GM12878 (cell line): ENCODE measurements at regions of chr3 and their contacts with region 1.

Region 1: GRCh38 chr3:167882067-167882667 is 146.6 kb downstream of the SERPINI1 start:
- DNase-seq: no peak
- ATAC-seq: peak; percentile 77
- H3K4me3 ChIP-seq: no peak overlapping the region
- H3K27ac ChIP-seq: no peak overlapping the region
- H3K4me1 ChIP-seq: no peaks in the 10 kb centered on the region
- H3K27me3 ChIP-seq: peaks cover 0 to 3% of the 10 kb centered on the region in 2 experiments; a peak in 1 of 4 replicates
- CTCF ChIP-seq: peak; percentile 37 to 63 (median 52); a peak in 5 of 6 replicates
- EP300 ChIP-seq: no peak
- POLR2A ChIP-seq: no peak
- RAD21 ChIP-seq: peak; percentile 73

Region 2: GRCh38 chr3:167380004-167380689 is 502.0 kb before region 1 on chr3 and contains the start of gene ZBBX:
- CTCF ChIA-PET with region 1: interaction called, 111 read pairs
- POLR2A ChIA-PET with region 1: no interaction called
- RAD21 ChIA-PET with region 1: interaction called, 65 read pairs
- SMC1A ChIA-PET with region 1: interaction called, 34 read pairs
- in situ Hi-C with region 1: loop called (anchors 5 kb)
- intact Hi-C with region 1: loop called (anchors 1 kb)
- DNase-seq: peak; percentile 51
- ATAC-seq: peak; percentile 99
- H3K4me3 ChIP-seq: peak within 1 kb of the TSS; percentile 48; the same call in 1 of the 2 replicates
- H3K27ac ChIP-seq: no peak within 1 kb of the TSS
- H3K4me1 ChIP-seq: no peaks in the 10 kb centered on the region
- H3K27me3 ChIP-seq: no peaks in the 10 kb centered on the region
- CTCF ChIP-seq: peak; percentile 93 to 96 (median 95)
- EP300 ChIP-seq: no peak
- POLR2A ChIP-seq: no peak
- RAD21 ChIP-seq: peak; percentile 80
- polyA plus RNA-seq, gene ZBBX: 0.27 TPM in 1 of 2 experiments, not detected in the other

Region 3: DNA sequence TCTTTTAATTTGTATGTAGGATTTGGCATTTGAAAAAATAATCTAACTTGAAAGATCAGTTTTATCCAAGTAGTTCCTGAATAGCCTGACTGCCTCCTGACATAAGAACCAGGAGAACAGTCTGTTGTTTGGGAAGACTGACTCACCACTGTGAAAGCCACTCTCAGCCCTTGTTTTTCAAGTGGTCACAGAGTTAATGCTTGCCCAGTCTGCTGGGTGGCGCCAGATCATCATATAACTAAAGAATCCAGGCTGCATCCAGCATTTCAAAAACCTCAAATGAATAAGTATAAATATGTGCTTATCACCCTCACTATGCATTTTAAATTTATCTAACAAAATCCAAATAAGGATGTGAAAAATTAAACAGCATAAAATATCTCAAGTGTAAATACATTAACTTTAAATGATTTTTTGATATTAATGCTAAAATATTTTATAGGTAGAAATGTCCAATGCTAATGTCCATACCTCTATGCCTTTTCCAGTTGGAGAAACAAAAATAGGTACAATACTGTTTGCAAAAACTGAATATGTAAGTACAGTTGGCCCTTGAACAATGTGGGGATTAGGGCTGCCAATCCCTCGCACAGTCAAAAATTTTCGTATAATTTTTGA is 475.2 kb before region 1 on chr3:
- CTCF ChIA-PET with region 1: interaction called, 9 read pairs
- POLR2A ChIA-PET with region 1: no interaction called
- RAD21 ChIA-PET with region 1: interaction called, 4 read pairs
- SMC1A ChIA-PET with region 1: interaction called, 4 read pairs
- in situ Hi-C with region 1: no loop called
- intact Hi-C with region 1: loop called (anchors 1 kb)
- DNase-seq: no peak
- ATAC-seq: peak; percentile 60; the same call in 2 of the 3 replicates
- H3K4me3 ChIP-seq: no peak overlapping the region
- H3K27ac ChIP-seq: no peak overlapping the region
- H3K4me1 ChIP-seq: no peaks in the 10 kb centered on the region
- H3K27me3 ChIP-seq: no peaks in the 10 kb centered on the region
- CTCF ChIP-seq: peak; percentile 6 to 40 (median 23); a peak in 3 of 6 replicates
- EP300 ChIP-seq: no peak
- POLR2A ChIP-seq: no peak
- RAD21 ChIP-seq: peak; percentile 49; the same call in 1 of the 2 replicates

Region 4: DNA sequence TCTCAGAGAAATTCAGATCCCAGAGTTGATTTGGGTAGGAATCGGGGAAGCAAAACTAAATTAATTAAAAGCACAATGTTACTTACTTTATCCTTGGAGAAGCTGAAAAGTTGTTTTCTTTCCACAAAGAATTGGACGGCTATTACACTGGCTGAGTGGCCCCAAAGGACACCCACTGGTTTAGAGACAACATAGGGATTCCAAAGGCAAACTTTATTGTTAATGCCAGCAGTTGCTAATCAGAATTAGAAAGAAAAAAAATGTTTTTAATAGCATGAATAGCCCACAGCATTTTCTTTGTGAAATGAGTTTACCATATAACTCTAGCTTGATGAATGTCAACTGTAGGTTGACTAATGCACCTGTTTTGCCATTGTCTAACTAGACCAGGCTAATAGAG is 280.1 kb before region 1 on chr3:
- CTCF ChIA-PET with region 1: no interaction called
- POLR2A ChIA-PET with region 1: no interaction called
- RAD21 ChIA-PET with region 1: no interaction called
- SMC1A ChIA-PET with region 1: interaction called, 3 read pairs
- in situ Hi-C with region 1: no loop called
- intact Hi-C with region 1: loop called (anchors 10 kb)
- DNase-seq: no peak
- ATAC-seq: no peak
- H3K4me3 ChIP-seq: no peak overlapping the region
- H3K27ac ChIP-seq: no peak overlapping the region
- H3K4me1 ChIP-seq: no peaks in the 10 kb centered on the region
- H3K27me3 ChIP-seq: no peaks in the 10 kb centered on the region
- CTCF ChIP-seq: no peak
- EP300 ChIP-seq: no peak
- POLR2A ChIP-seq: no peak
- RAD21 ChIP-seq: no peak

Region 5: GRCh38 chr3:167684388-167684993 is 197.7 kb before region 1 on chr3:
- CTCF ChIA-PET with region 1: interaction called, 7 read pairs
- POLR2A ChIA-PET with region 1: no interaction called
- RAD21 ChIA-PET with region 1: interaction called, 10 read pairs
- SMC1A ChIA-PET with region 1: interaction called, 6 read pairs
- in situ Hi-C with region 1: no loop called
- intact Hi-C with region 1: no loop called
- DNase-seq: no peak
- ATAC-seq: peak; percentile 92
- H3K4me3 ChIP-seq: no peak overlapping the region
- H3K27ac ChIP-seq: no peak overlapping the region
- H3K4me1 ChIP-seq: no peaks in the 10 kb centered on the region
- H3K27me3 ChIP-seq: no peaks in the 10 kb centered on the region
- CTCF ChIP-seq: peak; percentile 48 to 58 (median 58); a peak in 5 of 6 replicates
- EP300 ChIP-seq: no peak
- POLR2A ChIP-seq: no peak
- RAD21 ChIP-seq: peak; percentile 51

Region 6: DNA sequence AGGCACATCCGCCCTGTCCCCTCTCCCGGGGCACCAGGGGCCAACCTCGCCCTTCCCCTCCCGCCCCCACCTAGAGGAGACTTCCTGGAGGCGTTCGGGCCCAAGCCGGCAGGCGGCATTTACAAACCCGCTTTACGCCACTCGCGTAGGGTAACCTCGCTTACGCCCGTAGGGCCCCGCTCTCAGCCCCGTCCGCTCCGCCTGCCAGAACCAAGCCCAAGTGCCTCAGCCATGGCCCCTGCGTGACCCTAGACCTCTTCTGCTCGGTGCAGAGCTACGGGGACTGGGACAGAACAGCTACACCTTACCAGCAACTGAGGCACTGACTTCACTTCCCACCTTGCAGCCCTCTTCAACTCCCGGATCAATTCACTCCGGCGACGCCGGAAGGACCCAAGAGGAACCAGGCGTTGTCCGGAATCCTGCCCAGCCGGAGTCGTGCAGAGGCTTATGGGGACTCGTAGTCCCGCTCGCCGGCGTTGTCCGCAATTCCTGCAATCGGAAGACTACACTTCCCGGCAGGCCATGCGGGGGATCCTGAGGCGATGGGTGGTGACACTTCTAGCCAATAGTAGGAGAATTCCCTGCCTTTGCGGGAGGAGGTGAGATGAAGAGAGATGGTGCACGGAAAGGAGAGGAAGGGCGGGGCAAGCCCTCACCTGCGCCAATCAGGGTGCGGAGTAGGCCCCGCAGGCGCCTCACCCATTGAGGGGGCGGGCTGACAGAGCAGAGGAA is 147.5 kb before region 1 on chr3 and contains the start of gene PDCD10:
- CTCF ChIA-PET with region 1: interaction called, 8 read pairs
- POLR2A ChIA-PET with region 1: no interaction called
- RAD21 ChIA-PET with region 1: no interaction called
- SMC1A ChIA-PET with region 1: interaction called, 13 read pairs
- in situ Hi-C with region 1: no loop called
- intact Hi-C with region 1: loop called (anchors 5 kb)
- DNase-seq: peak; percentile 98
- ATAC-seq: peak; percentile 91
- H3K4me3 ChIP-seq: peak within 1 kb of the TSS; percentile 97
- H3K27ac ChIP-seq: peak within 1 kb of the TSS; percentile 86
- H3K4me1 ChIP-seq: peaks cover 3% of the 10 kb centered on the region; the same call in 1 of the 2 replicates
- H3K27me3 ChIP-seq: no peaks in the 10 kb centered on the region
- CTCF ChIP-seq: 0 out of 6 replicates have a peak, but pooled peaks of 1 of the 3 experiments have one; percentile 7
- EP300 ChIP-seq: no peak
- POLR2A ChIP-seq: peak; percentile 85
- RAD21 ChIP-seq: no peak
- polyA plus RNA-seq, gene PDCD10: 199 to 247 TPM

Region 7: GRCh38 chr3:167740961-167741587 is 141.1 kb before region 1 on chr3:
- CTCF ChIA-PET with region 1: interaction called, 8 read pairs
- POLR2A ChIA-PET with region 1: no interaction called
- RAD21 ChIA-PET with region 1: interaction called, 13 read pairs
- SMC1A ChIA-PET with region 1: interaction called, 13 read pairs
- in situ Hi-C with region 1: no loop called
- intact Hi-C with region 1: no loop called
- DNase-seq: no peak
- ATAC-seq: peak; percentile 97
- H3K4me3 ChIP-seq: no peak overlapping the region
- H3K27ac ChIP-seq: no peak overlapping the region
- H3K4me1 ChIP-seq: no peaks in the 10 kb centered on the region
- H3K27me3 ChIP-seq: no peaks in the 10 kb centered on the region
- CTCF ChIP-seq: peak; percentile 60 to 71 (median 69)
- EP300 ChIP-seq: no peak
- POLR2A ChIP-seq: no peak
- RAD21 ChIP-seq: peak; percentile 65

Region 8: DNA sequence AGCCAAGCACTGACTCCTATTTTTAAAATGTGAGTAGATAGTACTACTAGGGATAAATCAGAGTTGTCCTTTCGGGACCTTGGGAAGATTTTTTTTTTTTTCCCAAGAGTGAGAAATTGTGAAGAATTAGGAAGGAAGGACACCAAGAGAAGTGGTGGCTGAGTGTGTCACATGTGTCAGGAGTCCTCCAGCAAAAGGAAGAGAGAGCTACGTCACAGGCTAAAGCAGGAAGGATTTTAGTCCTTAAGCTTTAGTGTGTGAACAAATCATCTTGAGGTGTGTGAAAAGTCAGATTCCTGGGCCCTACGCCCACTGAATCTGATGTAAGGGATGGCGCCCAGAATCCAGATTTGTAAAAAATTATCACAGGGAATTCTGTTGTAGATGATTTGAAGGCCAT is 26.1 kb after region 1 on chr3:
- CTCF ChIA-PET with region 1: no interaction called
- POLR2A ChIA-PET with region 1: no interaction called
- RAD21 ChIA-PET with region 1: no interaction called
- SMC1A ChIA-PET with region 1: no interaction called
- in situ Hi-C with region 1: no loop called
- intact Hi-C with region 1: no loop called
- DNase-seq: no peak
- ATAC-seq: no peak
- H3K4me3 ChIP-seq: no peak overlapping the region
- H3K27ac ChIP-seq: no peak overlapping the region
- H3K4me1 ChIP-seq: no peaks in the 10 kb centered on the region
- H3K27me3 ChIP-seq: no peaks in the 10 kb centered on the region; a peak in 1 of 4 replicates
- CTCF ChIP-seq: no peak
- EP300 ChIP-seq: no peak
- POLR2A ChIP-seq: no peak
- RAD21 ChIP-seq: no peak

Region 9: DNA sequence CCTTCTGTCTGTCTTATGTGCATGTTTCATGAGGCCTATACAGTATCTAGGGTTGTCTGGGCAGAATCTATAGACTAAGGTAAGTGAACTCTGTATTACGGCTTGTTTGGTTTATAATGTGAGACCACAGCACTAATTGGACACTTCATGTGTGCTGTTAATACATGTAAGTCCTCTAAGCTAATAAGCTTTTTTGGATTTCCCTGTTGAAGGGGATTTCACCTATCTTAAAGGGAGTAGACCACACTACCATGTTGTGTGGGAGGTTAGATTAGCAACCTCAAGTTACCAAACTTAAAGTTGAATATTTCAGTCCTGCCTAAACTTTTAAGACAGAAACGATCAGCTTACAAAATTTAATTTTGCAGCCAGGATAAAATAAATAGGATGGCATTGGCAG is 403.3 kb after region 1 on chr3:
- CTCF ChIA-PET with region 1: no interaction called
- POLR2A ChIA-PET with region 1: no interaction called
- RAD21 ChIA-PET with region 1: no interaction called
- SMC1A ChIA-PET with region 1: no interaction called
- in situ Hi-C with region 1: no loop called
- intact Hi-C with region 1: no loop called
- DNase-seq: no peak
- ATAC-seq: peak; percentile 77
- H3K4me3 ChIP-seq: no peak overlapping the region
- H3K27ac ChIP-seq: no peak overlapping the region
- H3K4me1 ChIP-seq: no peaks in the 10 kb centered on the region; the same call in 1 of the 2 replicates
- H3K27me3 ChIP-seq: no peaks in the 10 kb centered on the region
- CTCF ChIP-seq: no peak
- EP300 ChIP-seq: no peak
- POLR2A ChIP-seq: no peak
- RAD21 ChIP-seq: no peak